Heart left ventricle (tissue), 16 donors: ENCODE measurements at regions of chr13 and their contacts with region 1.

Region 1: GRCh38 chr13:110819203-110820014 is 95.5 kb downstream of the ANKRD10 start:
- DNase-seq: peak; percentile 64 to 89 (median 78)
- ATAC-seq: peak; percentile 75 to 95 (median 90)
- H3K4me3 ChIP-seq: no peak overlapping the region
- H3K27ac ChIP-seq: no peak overlapping the region
- H3K4me1 ChIP-seq: peaks cover 0 to 7% (median 1%) of the 10 kb centered on the region in 12 donors
- H3K27me3 ChIP-seq: no peaks in the 10 kb centered on the region
- CTCF ChIP-seq: peak; percentile 81 to 99 (median 98)
- POLR2A ChIP-seq: no peak

Region 2: GRCh38 chr13:110455941-110456340 is 363.5 kb before region 1 on chr13:
- intact Hi-C with region 1: loop called in 4 of 10 experiments (anchors 5 to 10 kb)
- DNase-seq: peak; percentile 69 to 86 (median 82)
- ATAC-seq: peak; percentile 62 to 89 (median 84)
- H3K4me3 ChIP-seq: no peak overlapping the region
- H3K27ac ChIP-seq: peak overlapping the region in 2 of 12 donors; percentile 17 to 33
- H3K4me1 ChIP-seq: peaks cover 0 to 15% (median 1%) of the 10 kb centered on the region in 12 donors
- H3K27me3 ChIP-seq: no peaks in the 10 kb centered on the region
- CTCF ChIP-seq: peak; percentile 56 to 89 (median 75)
- POLR2A ChIP-seq: no peak

Region 3: GRCh38 chr13:110593430-110594130 is 225.8 kb before region 1 on chr13:
- intact Hi-C with region 1: loop called (anchors 1 to 5 kb)
- DNase-seq: no peak
- ATAC-seq: peak; percentile 81 to 94 (median 82)
- H3K4me3 ChIP-seq: no peak overlapping the region
- H3K27ac ChIP-seq: no peak overlapping the region
- H3K4me1 ChIP-seq: peaks cover 0 to 5% (median 0%) of the 10 kb centered on the region in 12 donors
- H3K27me3 ChIP-seq: no peaks in the 10 kb centered on the region
- CTCF ChIP-seq: peak; percentile 53 to 76 (median 64)
- POLR2A ChIP-seq: no peak

Region 4: DNA sequence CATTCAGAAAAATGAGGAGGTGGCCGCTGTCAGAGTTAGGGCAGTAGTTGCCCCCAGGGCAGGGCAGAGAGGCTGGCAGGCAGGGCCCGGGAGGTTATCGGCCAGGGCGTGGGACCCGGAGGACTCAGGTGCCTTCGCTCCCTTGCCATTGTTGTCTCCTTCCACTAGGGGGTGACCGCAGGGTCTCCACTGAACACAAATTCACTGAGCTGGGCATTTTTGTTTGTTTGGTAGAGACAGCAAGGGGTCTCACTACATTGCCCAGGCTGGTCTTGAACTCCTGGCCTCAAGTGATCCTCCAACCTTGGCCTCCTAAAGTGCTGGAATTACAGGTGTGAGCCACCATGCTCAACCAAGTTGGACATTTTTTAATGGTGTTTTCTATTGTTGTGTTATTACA is 138.6 kb before region 1 on chr13:
- intact Hi-C with region 1: loop called in 2 of 10 experiments (anchors 5 to 10 kb)
- DNase-seq: no peak
- ATAC-seq: peak in 1 of 4 donors; percentile 35
- H3K4me3 ChIP-seq: no peak overlapping the region
- H3K27ac ChIP-seq: no peak overlapping the region
- H3K4me1 ChIP-seq: peaks cover 0 to 7% (median 0%) of the 10 kb centered on the region in 12 donors
- H3K27me3 ChIP-seq: no peaks in the 10 kb centered on the region
- CTCF ChIP-seq: peak in 10 of 12 donors; percentile 8 to 41 (median 26)
- POLR2A ChIP-seq: no peak

Region 5: DNA sequence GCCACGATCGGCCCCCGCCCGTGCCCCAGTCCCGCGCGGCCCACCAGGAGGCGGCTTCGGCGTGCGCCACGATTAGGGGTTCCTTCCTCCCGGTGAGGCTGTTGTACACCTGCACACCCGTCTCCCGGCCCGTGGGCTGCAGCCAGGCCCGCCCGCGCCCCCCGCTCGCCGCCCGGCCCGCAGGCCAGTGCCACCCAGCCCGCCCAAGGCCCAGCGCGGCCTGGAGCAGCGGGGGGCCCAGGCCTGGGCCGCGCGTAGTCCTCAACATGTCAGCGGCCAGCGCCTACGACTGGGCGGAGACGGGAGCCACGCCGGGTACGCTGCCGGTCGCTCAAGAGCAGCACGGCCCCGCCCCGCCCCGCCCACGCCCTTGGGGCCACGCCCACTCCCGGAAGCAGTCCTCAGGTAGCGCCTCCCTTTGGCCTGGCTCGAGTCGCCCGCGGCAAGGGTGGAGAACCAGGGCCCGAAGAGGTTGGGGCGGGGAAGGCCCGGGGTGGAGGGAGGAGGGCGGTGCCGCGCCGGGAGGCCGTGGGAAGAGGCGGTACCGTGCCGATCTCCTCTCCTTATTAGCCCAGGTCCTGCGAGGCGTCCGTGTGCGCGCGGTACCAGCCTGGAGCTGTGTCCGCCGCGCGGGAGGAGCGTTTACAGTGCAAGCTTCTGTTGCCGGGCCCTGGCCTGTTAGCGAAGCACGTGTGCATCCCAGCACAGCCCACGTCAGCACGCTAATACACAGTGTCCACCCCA is 113.4 kb before region 1 on chr13 and contains the start of gene CARS2:
- intact Hi-C with region 1: loop called in 3 of 10 experiments (anchors 5 to 10 kb)
- DNase-seq: peak; percentile 94 to 98 (median 96)
- ATAC-seq: peak; percentile 96 to 99 (median 98)
- H3K4me3 ChIP-seq: peak within 1 kb of the TSS; percentile 34 to 92 (median 78)
- H3K27ac ChIP-seq: peak within 1 kb of the TSS; percentile 59 to 100 (median 82)
- H3K4me1 ChIP-seq: peaks cover 4 to 35% (median 16%) of the 10 kb centered on the region in 12 donors
- H3K27me3 ChIP-seq: no peaks in the 10 kb centered on the region
- CTCF ChIP-seq: peak in 7 of 12 donors; percentile 12 to 36 (median 23)
- POLR2A ChIP-seq: peak in 1 of 2 donors; percentile 59
- total RNA-seq, gene CARS2: 35.4 to 48.4 (median 43.5) TPM

Region 6: DNA sequence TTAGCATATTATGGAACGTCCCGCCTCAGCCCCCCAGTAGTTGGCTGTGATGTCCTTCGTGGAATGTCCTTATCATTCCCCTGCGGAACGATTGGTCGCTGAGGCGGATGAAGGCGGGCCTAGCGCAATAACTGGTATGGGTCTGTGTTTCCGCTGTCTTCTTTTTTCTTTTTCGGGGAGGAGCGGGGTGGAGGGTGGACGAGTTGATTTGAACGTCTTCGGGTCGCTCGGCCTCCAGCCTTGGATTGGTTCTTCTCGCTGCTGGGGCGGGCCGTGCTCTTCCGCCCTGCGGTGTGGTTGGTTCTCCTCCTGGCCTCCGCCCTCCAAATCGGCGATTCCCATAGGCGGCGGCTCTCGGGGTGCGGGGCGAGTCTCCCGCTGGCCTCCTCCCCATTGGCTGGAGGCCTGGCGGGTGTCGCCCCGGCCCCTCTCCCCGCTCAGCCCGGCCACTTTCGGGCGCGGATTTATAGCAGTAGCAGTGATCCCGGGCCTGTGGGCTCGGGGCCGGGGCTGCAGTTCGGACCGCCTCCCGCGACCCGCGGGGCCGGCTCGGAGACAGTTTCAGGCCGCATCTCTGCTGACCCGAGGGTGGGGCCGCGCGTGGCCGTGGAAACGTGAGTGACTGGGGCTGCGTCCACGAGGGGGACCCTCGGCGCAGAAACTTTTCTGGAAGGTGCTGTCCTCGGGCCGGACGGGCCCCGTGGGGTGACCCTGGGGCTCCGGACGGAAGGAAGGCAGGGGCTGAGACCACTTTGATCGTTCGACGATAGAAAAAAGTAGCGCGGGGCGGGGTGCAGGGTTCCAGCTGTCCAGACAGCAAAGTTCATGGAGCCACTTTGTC is 103.8 kb before region 1 on chr13:
- intact Hi-C with region 1: loop called in 7 of 10 experiments (anchors 5 to 10 kb)
- DNase-seq: peak; percentile 98 to 99 (median 98)
- ATAC-seq: peak; percentile 76 to 84 (median 80)
- H3K4me3 ChIP-seq: peak overlapping the region; percentile 57 to 98 (median 95)
- H3K27ac ChIP-seq: peak overlapping the region; percentile 87 to 100 (median 100)
- H3K4me1 ChIP-seq: peaks cover 4 to 33% (median 27%) of the 10 kb centered on the region in 12 donors
- H3K27me3 ChIP-seq: no peaks in the 10 kb centered on the region
- CTCF ChIP-seq: peak in 7 of 12 donors; percentile 16 to 50 (median 30)
- POLR2A ChIP-seq: peak; percentile 54 to 80

Region 7: GRCh38 chr13:110944121-110944967 is 124.9 kb after region 1 on chr13:
- intact Hi-C with region 1: no loop called
- DNase-seq: peak in 1 of 5 donors; percentile 30
- ATAC-seq: peak in 3 of 4 donors; percentile 70 to 82 (median 76)
- H3K4me3 ChIP-seq: no peak overlapping the region
- H3K27ac ChIP-seq: peak overlapping the region in 8 of 12 donors; percentile 29 to 61 (median 44)
- H3K4me1 ChIP-seq: peaks cover 0 to 19% (median 6%) of the 10 kb centered on the region in 12 donors
- H3K27me3 ChIP-seq: no peaks in the 10 kb centered on the region
- CTCF ChIP-seq: peak; percentile 12 to 64 (median 39)
- POLR2A ChIP-seq: no peak

Region 8: DNA sequence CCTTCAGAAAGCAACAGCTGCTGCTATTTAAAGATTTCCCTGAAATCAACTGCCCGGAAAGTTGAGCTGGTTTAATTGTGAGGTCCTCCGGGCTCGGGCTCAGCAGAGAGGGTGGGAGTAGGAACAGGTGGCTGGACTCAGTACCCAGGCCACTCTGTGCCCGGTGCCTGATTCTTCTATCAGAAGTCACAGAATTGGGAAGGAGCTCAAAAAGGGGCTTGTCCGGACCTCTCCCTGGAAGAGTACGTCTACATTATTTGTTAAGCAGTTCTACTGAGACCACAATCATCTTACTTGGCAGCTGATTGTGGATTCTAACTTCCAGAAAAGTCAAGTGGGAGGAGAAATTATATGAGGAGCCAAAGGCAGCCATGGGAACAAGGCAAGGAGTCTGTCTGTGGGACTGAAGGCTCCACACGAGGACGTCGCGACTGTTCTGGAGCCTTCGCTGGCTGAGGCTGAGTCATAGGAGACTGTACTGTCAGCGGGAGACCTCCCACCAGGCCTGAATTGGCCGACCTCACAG is 187.2 kb after region 1 on chr13:
- intact Hi-C with region 1: no loop called
- DNase-seq: peak; percentile 84 to 92 (median 88)
- ATAC-seq: peak; percentile 93 to 97 (median 96)
- H3K4me3 ChIP-seq: peak overlapping the region in 4 of 12 donors; percentile 1 to 15 (median 5)
- H3K27ac ChIP-seq: peak overlapping the region; percentile 70 to 93 (median 88)
- H3K4me1 ChIP-seq: peaks cover 3 to 37% (median 23%) of the 10 kb centered on the region in 12 donors
- H3K27me3 ChIP-seq: no peaks in the 10 kb centered on the region
- CTCF ChIP-seq: no peak
- POLR2A ChIP-seq: no peak

Region 9: DNA sequence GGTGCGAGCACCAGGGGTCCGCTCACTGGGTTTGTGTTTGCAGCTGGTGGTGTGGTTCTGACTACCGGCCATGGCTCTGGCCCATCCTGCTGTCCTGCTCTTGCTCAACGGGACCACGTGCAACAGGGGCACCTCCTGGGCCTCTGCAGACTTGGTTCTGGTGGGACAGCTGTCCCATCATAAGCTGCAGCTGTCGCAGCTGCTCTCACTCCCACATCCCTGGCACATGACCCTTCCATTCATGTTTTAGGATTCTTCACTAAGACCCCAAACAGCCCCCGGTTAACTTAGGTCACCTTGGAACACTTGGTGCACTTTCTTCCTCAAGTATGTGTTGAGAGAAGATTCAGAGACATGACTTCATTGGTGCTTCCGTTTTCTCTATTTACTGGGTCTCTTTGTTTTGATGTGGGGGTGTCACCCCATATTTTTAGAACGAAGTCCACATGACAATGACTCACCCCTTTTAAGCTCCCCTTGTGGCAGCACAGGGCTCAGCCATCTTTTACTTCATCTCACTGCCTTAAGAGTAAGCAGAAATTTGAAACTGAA is 227.3 kb after region 1 on chr13:
- intact Hi-C with region 1: loop called in 1 of 10 experiments (anchors 10 kb)
- DNase-seq: peak in 4 of 5 donors; percentile 48 to 59 (median 56)
- ATAC-seq: peak; percentile 39 to 79 (median 66)
- H3K4me3 ChIP-seq: no peak overlapping the region
- H3K27ac ChIP-seq: peak overlapping the region in 6 of 12 donors; percentile 32 to 71 (median 62)
- H3K4me1 ChIP-seq: peaks cover 0 to 20% (median 7%) of the 10 kb centered on the region in 12 donors
- H3K27me3 ChIP-seq: no peaks in the 10 kb centered on the region
- CTCF ChIP-seq: peak in 8 of 12 donors; percentile 12 to 38 (median 26)
- POLR2A ChIP-seq: no peak